Left colon (tissue), 2 donors: ENCODE measurements at regions of chr21 and their contacts with region 1.

Region 1: GRCh38 chr21:42392721-42393442 is 3.0 kb downstream of the TMPRSS3 start:
- DNase-seq: no peak
- ATAC-seq: no peak

Region 2: GRCh38 chr21:42456457-42456856 is 63.6 kb after region 1 on chr21:
- intact Hi-C with region 1: loop called in 1 of 2 experiments (anchors 10 kb)
- DNase-seq: peak in 1 of 2 donors; percentile 26
- ATAC-seq: peak; percentile 25